IMR-90 (cell line): ENCODE measurements at regions of chr1 and their contacts with region 1.

Region 1: GRCh38 chr1:56578963-56579875 is at the start of gene PLPP3:
- DNase-seq: peak; percentile 94
- ATAC-seq: peak; percentile 89
- H3K4me3 ChIP-seq: peak within 1 kb of the TSS; percentile 81
- H3K27ac ChIP-seq: peak within 1 kb of the TSS; percentile 79
- H3K4me1 ChIP-seq: peaks cover 2% of the 10 kb centered on the region
- H3K27me3 ChIP-seq: no peaks in the 10 kb centered on the region
- CTCF ChIP-seq: peak; percentile 61
- POLR2A ChIP-seq: peak; percentile 90
- RAD21 ChIP-seq: peak; percentile 59
- total RNA-seq, gene PLPP3: 46.4 and 56.6 TPM in 2 replicates

Region 2: DNA sequence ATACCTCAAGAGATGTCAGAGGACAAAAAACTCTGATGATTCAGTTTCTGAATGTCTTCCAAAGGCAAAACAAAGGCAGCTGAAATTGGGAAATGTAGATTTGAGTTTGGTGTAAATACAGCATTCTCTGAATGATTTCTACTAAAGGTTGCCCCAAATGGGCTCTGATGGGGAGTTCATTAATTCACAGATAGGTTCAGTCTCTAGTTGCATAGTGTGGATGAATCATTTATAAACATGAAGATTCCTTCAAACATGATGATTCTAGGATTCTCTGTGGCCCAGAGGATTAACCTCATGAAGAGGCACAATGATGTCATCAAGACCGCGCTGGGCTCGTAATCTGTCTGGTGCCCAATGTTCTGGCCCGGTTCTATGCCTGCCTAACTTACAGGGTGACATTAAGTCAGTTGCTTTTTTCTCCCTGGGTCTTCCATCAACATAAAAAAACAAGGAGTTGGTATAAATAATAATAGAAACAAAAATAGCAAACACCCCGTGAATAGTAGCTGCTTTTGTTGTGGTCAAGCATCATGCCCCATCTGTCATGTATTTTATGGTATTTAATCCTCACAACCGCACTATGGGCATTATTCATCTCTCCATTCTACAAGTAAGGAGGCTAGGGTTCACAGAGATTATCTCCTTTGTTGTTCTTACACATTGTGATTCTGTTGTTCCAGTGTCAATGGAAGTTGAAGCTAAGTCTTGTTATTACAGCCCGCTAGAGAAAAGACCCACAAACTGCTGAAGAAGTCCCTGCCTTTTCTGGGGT is 854.5 kb before region 1 on chr1:
- CTCF ChIA-PET with region 1: no interaction called
- POLR2A ChIA-PET with region 1: no interaction called
- dilution Hi-C with region 1: no loop called
- in situ Hi-C with region 1: no loop called
- intact Hi-C with region 1: loop called (anchors 2 kb)
- DNase-seq: peak; percentile 97
- ATAC-seq: peak; percentile 87
- H3K4me3 ChIP-seq: no peak overlapping the region
- H3K27ac ChIP-seq: peak overlapping the region; percentile 84
- H3K4me1 ChIP-seq: peaks cover 17% of the 10 kb centered on the region
- H3K27me3 ChIP-seq: no peaks in the 10 kb centered on the region
- CTCF ChIP-seq: no peak
- POLR2A ChIP-seq: no peak
- RAD21 ChIP-seq: no peak; the same call in 1 of the 2 replicates

Region 3: DNA sequence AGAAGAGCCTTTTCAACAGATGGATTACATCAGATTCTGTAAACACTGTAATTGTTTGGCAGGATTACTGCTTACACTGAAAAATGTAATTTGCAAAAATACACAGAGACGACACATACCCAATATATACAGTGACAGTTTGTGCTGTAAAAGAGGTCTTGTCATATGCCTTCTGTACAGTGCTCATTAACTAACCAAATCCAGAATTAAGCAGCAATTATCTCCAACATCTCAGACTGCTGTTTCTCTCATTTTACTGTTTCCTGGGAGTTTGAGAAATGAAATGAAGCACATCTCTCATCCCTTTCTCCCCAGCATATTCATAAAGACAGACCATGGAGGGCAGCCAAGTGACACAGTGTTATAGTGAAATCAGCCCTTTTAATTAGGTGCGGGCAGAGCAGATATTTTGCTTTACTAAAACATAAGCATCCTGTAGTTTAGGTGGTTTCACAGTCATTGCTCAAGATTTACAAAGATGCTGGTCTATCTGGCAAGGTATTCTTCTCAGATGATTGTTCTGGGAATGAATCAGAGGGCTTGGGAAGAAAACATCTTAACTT is 745.6 kb before region 1 on chr1:
- CTCF ChIA-PET with region 1: no interaction called
- POLR2A ChIA-PET with region 1: no interaction called
- dilution Hi-C with region 1: no loop called
- in situ Hi-C with region 1: no loop called
- intact Hi-C with region 1: loop called (anchors 5 kb)
- DNase-seq: peak; percentile 92
- ATAC-seq: peak; percentile 74
- H3K4me3 ChIP-seq: no peak overlapping the region
- H3K27ac ChIP-seq: peak overlapping the region; percentile 52; the same call in 1 of the 2 replicates
- H3K4me1 ChIP-seq: peaks cover 11% of the 10 kb centered on the region
- H3K27me3 ChIP-seq: no peaks in the 10 kb centered on the region
- CTCF ChIP-seq: no peak
- POLR2A ChIP-seq: no peak
- RAD21 ChIP-seq: no peak

Region 4: GRCh38 chr1:55974714-55975511 is 604.3 kb before region 1 on chr1:
- CTCF ChIA-PET with region 1: no interaction called
- POLR2A ChIA-PET with region 1: no interaction called
- dilution Hi-C with region 1: no loop called
- in situ Hi-C with region 1: no loop called
- intact Hi-C with region 1: loop called (anchors 5 kb)
- DNase-seq: peak; percentile 76
- ATAC-seq: peak; percentile 82
- H3K4me3 ChIP-seq: no peak overlapping the region
- H3K27ac ChIP-seq: peak overlapping the region; percentile 86
- H3K4me1 ChIP-seq: peaks cover 8% of the 10 kb centered on the region
- H3K27me3 ChIP-seq: no peaks in the 10 kb centered on the region
- CTCF ChIP-seq: no peak
- POLR2A ChIP-seq: no peak
- RAD21 ChIP-seq: no peak

Region 5: DNA sequence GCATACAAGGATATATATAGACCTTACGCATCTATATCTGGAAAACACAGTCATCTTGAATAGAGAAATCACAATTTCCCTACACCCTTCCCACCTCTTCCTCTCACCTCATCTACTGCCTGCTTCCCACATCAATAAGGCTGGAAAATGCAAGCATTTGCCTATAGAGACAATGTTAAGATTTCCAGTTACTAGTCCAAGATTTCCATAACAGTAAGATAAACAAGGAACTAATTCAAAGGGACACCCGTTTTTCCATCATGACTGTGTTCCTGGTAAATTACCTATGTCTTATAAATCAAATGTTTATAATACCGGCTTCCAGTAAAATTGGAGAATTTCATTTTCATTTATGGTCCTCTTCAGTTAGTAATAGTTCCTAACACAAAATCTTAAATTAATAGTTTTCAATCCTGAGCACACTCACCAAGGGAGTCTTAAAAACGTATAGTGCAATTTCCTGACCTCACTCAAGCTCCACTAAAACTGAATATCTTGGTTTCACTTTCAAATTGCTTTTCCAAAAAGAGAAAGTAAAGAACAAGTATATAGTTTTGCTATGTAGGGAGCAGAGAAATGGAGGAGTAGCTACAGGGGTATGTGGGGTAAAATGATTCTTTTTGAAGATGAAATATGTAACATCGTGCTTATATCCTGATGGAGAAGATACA is 398.6 kb before region 1 on chr1:
- CTCF ChIA-PET with region 1: no interaction called
- POLR2A ChIA-PET with region 1: no interaction called
- dilution Hi-C with region 1: no loop called
- in situ Hi-C with region 1: no loop called
- intact Hi-C with region 1: loop called (anchors 5 kb)
- DNase-seq: peak; percentile 31
- ATAC-seq: peak; percentile 76
- H3K4me3 ChIP-seq: peak overlapping the region; percentile 7; the same call in 1 of the 2 replicates
- H3K27ac ChIP-seq: no peak overlapping the region
- H3K4me1 ChIP-seq: 0 out of 2 replicates have a peak, but pooled peaks cover 1% of the 10 kb centered on the region
- H3K27me3 ChIP-seq: no peaks in the 10 kb centered on the region
- CTCF ChIP-seq: no peak
- POLR2A ChIP-seq: no peak
- RAD21 ChIP-seq: no peak

Region 6: DNA sequence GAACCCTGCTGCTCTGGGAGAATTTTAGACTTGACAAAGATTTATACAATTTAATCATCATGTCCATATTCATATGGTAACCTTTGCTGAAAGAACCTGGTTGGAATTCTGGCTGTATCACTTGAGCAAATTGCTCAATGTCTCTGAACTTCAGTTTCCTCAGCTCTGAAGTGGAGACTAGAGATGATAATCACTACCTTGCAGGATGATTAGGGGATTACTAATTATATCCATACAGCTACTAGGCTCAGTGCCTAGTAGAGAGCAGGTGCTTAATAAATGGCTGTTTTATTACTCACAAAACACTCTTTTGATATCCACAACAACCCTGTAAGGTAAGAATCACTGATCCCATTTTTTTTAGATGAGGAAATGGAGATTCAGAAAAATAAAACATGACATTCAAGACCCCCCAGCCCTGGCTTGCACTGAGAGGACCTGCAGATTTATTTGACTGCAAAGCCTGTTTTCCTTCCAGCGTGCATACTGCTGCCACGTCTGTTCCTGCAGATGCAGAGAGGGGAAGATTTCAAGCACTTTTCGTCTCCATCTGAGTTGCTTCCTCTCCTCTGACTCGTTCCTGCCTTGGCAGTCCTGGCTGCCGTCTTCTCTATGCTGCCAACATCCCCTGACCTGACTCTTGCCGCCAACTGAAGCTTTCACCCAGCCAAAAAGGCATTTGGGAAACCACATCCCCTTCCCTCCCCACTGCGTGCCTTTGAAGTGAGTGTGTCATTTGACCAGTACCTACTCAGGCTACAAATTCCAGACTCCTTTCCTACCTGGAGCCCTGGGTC is 202.8 kb before region 1 on chr1:
- CTCF ChIA-PET with region 1: no interaction called
- POLR2A ChIA-PET with region 1: no interaction called
- dilution Hi-C with region 1: no loop called
- in situ Hi-C with region 1: no loop called
- intact Hi-C with region 1: loop called (anchors 5 kb)
- DNase-seq: peak; percentile 31
- ATAC-seq: peak; percentile 34; the same call in 1 of the 2 replicates
- H3K4me3 ChIP-seq: no peak overlapping the region
- H3K27ac ChIP-seq: no peak overlapping the region
- H3K4me1 ChIP-seq: peaks cover 16% of the 10 kb centered on the region
- H3K27me3 ChIP-seq: peaks cover 2% of the 10 kb centered on the region; the same call in 1 of the 2 replicates
- CTCF ChIP-seq: no peak
- POLR2A ChIP-seq: no peak
- RAD21 ChIP-seq: no peak